ENCODE measurements at regions of chr3 and their contacts with region 1.

Region 1: DNA sequence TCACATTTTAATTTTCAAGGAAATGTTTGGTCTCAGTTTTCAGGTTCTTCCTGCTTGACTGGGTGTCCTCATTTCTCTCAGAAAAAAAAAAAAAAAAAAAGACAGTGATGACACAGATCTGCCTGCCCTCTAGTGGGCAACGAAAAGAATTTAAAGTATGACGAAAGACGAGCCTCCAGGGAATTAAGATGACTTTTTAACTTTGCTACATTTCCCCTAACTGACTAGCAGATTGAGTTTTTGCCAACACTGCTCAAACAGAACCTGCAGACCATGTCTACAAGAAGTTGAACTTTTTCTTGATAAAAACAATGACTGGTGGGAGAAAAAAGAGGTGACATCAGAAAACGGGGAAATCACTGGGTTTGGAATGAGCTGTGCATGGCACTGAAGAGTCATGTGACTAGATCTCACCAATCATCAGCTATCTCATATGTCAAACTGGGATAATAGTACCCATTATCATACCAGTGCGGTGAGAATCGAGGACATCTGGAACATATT is 40.8 kb downstream of the EOMES start:
- DNase-seq: no peak
- ATAC-seq: peak; percentile 61
- H3K4me3 Mint-ChIP-seq: peak overlapping the region; percentile 56
- H3K27ac Mint-ChIP-seq: peak overlapping the region; percentile 98
- H3K4me1 Mint-ChIP-seq: peaks cover 27% of the 10 kb centered on the region
- H3K27me3 Mint-ChIP-seq: no peaks in the 10 kb centered on the region
- CTCF ChIP-seq: peak; percentile 60

Region 2: GRCh38 chr3:27357665-27358258 is 323.5 kb before region 1 on chr3:
- CTCF ChIA-PET with region 1: interaction called, 25 read pairs
- POLR2A ChIA-PET with region 1: no interaction called
- DNase-seq: peak; percentile 61
- ATAC-seq: peak; percentile 89
- H3K4me3 Mint-ChIP-seq: no peak overlapping the region
- H3K27ac Mint-ChIP-seq: no peak overlapping the region
- H3K4me1 Mint-ChIP-seq: peaks cover 39% of the 10 kb centered on the region
- H3K27me3 Mint-ChIP-seq: no peaks in the 10 kb centered on the region; the same call in 1 of the 2 replicates
- CTCF ChIP-seq: no peak

Region 3: GRCh38 chr3:27623085-27623753 is 58.1 kb before region 1 on chr3:
- CTCF ChIA-PET with region 1: interaction called, 13 read pairs
- POLR2A ChIA-PET with region 1: no interaction called
- DNase-seq: no peak
- ATAC-seq: no peak
- H3K4me3 Mint-ChIP-seq: no peak overlapping the region
- H3K27ac Mint-ChIP-seq: no peak overlapping the region
- H3K4me1 Mint-ChIP-seq: peaks cover 9% of the 10 kb centered on the region
- H3K27me3 Mint-ChIP-seq: no peaks in the 10 kb centered on the region
- CTCF ChIP-seq: no peak

Region 4: DNA sequence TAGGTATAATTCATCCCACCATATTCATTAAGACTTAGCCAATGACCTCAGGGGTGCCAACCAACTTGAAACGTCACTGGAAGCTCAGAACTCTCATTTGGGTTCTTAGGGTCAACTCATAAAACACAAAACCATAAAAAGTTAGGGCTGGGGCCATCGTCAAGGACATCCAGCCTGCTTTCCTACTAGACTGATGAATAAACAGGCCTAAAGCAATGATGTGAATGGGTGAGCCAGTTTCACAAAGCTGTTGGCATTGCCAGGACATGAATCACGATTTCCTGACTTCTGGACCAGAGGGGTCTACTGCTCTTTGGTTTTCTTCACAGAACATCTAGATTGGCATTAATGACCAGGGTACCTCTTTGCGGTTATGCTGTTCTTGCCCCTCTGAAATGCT is 23.9 kb before region 1 on chr3:
- CTCF ChIA-PET with region 1: interaction called, 11 read pairs
- POLR2A ChIA-PET with region 1: interaction called, 6 read pairs
- DNase-seq: no peak
- ATAC-seq: no peak
- H3K4me3 Mint-ChIP-seq: no peak overlapping the region
- H3K27ac Mint-ChIP-seq: no peak overlapping the region
- H3K4me1 Mint-ChIP-seq: peaks cover 36% of the 10 kb centered on the region
- H3K27me3 Mint-ChIP-seq: no peaks in the 10 kb centered on the region
- CTCF ChIP-seq: no peak

Region 5: GRCh38 chr3:27721717-27722542 is 40.6 kb after region 1 on chr3 and contains the start of gene EOMES:
- CTCF ChIA-PET with region 1: interaction called, 20 read pairs
- POLR2A ChIA-PET with region 1: no interaction called
- DNase-seq: peak; percentile 81
- ATAC-seq: peak; percentile 69
- H3K4me3 Mint-ChIP-seq: peak within 1 kb of the TSS; percentile 85
- H3K27ac Mint-ChIP-seq: no peak within 1 kb of the TSS
- H3K4me1 Mint-ChIP-seq: peaks cover 78% of the 10 kb centered on the region
- H3K27me3 Mint-ChIP-seq: peaks cover 94% of the 10 kb centered on the region
- CTCF ChIP-seq: peak; percentile 23
- total RNA-seq, gene EOMES: 0.76 to 1.4 TPM (median 1.1 TPM) in 3 replicates

Measured in WTC11 (cell line).